ENCODE measurements at regions of chr10 and their contacts with region 1.

Region 1: GRCh38 chr10:50988792-50989191 is 85.5 kb upstream of the PRKG1 start:
- DNase-seq: no peak
- H3K4me3 ChIP-seq: peak overlapping the region in 3 of 4 donors; percentile 33 to 36 (median 36)
- H3K27ac ChIP-seq: peak overlapping the region in 1 of 4 donors; percentile 32
- H3K4me1 ChIP-seq: peaks cover 4 to 39% (median 34%) of the 10 kb centered on the region in 4 donors
- H3K27me3 ChIP-seq: peaks cover 0 to 22% (median 0%) of the 10 kb centered on the region in 4 donors
- CTCF ChIP-seq: peak; percentile 51 to 54 (median 53)
- EP300 ChIP-seq: no peak
- POLR2A ChIP-seq: no peak

Region 2: DNA sequence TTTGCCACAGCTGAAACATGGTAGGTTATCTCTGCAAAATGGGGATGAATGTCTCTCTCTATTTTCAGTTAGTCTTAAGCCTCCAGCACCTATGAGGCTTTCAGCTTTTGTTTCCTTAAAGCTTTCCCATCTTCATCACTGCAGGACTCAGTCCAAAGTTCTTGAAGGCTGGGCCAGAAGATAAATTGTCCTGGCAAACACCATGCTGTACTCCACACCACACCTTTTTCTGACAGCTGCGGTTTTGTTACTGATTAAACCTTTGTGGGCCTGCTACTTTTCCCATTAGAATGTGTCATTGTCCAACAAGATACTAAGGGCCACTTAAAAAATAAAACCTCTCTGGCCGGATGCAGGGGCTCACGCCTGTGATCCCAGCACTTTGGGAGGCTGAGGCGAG is 16.2 kb before region 1 on chr10:
- intact Hi-C with region 1: no loop called
- DNase-seq: no peak
- H3K4me3 ChIP-seq: no peak overlapping the region
- H3K27ac ChIP-seq: no peak overlapping the region
- H3K4me1 ChIP-seq: no peaks in the 10 kb centered on the region
- H3K27me3 ChIP-seq: peaks cover 0 to 3% (median 0%) of the 10 kb centered on the region in 4 donors
- CTCF ChIP-seq: no peak
- EP300 ChIP-seq: no peak
- POLR2A ChIP-seq: no peak

Region 3: GRCh38 chr10:51074238-51075028 is 85.6 kb after region 1 on chr10 and contains the start of gene PRKG1:
- intact Hi-C with region 1: loop called (anchors 5 kb)
- DNase-seq: peak; percentile 96
- H3K4me3 ChIP-seq: peak within 1 kb of the TSS; percentile 63 to 74 (median 70)
- H3K27ac ChIP-seq: peak within 1 kb of the TSS; percentile 86 to 93 (median 92)
- H3K4me1 ChIP-seq: peaks cover 12 to 47% (median 42%) of the 10 kb centered on the region in 4 donors
- H3K27me3 ChIP-seq: no peaks in the 10 kb centered on the region
- CTCF ChIP-seq: no peak
- EP300 ChIP-seq: no peak
- POLR2A ChIP-seq: no peak
- total RNA-seq, gene PRKG1: 24.5 to 46.1 (median 37.1) TPM

Region 4: GRCh38 chr10:52215745-52216361 is 1227.1 kb after region 1 on chr10:
- intact Hi-C with region 1: loop called (anchors 5 kb)
- DNase-seq: no peak
- H3K4me3 ChIP-seq: no peak overlapping the region
- H3K27ac ChIP-seq: no peak overlapping the region
- H3K4me1 ChIP-seq: peaks cover 0 to 11% (median 0%) of the 10 kb centered on the region in 4 donors
- H3K27me3 ChIP-seq: no peaks in the 10 kb centered on the region
- CTCF ChIP-seq: peak; percentile 72 to 79 (median 74)
- EP300 ChIP-seq: no peak
- POLR2A ChIP-seq: no peak

Region 5: GRCh38 chr10:52488606-52489485 is 1500.1 kb after region 1 on chr10:
- intact Hi-C with region 1: loop called (anchors 5 kb)
- DNase-seq: no peak
- H3K4me3 ChIP-seq: no peak overlapping the region
- H3K27ac ChIP-seq: no peak overlapping the region
- H3K4me1 ChIP-seq: no peaks in the 10 kb centered on the region
- H3K27me3 ChIP-seq: no peaks in the 10 kb centered on the region
- CTCF ChIP-seq: peak; percentile 38 to 57 (median 49)
- EP300 ChIP-seq: no peak
- POLR2A ChIP-seq: no peak